ENCODE measurements at regions of chr6 and their contacts with region 1.

Region 1: DNA sequence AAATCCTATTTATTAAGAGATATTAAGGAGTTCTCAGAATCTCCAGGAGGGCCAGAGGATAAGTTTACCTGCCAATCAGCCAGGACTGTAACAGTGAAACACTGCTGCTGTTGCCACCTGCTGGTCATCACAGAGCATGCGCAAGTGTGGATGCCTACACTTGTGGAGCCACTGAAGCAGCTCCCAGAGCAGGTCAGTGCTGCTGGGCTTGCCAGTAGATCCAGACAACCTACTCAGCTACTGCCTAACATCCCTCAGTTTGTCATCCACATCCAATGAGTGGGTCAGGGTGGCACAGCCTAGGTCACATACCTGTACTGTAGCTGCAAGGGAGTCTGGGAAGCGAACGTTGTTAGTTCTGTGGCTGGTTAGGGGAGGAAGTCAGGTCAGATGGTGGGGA is 18.3 kb upstream of the NHSL1 start:
- DNase-seq: peak; percentile 68
- ATAC-seq: peak; percentile 97
- H3K4me3 ChIP-seq: no peak overlapping the region
- H3K27ac ChIP-seq: no peak overlapping the region
- H3K4me1 ChIP-seq: no peaks in the 10 kb centered on the region
- H3K27me3 ChIP-seq: no peaks in the 10 kb centered on the region
- CTCF ChIP-seq: peak; percentile 75

Region 2: DNA sequence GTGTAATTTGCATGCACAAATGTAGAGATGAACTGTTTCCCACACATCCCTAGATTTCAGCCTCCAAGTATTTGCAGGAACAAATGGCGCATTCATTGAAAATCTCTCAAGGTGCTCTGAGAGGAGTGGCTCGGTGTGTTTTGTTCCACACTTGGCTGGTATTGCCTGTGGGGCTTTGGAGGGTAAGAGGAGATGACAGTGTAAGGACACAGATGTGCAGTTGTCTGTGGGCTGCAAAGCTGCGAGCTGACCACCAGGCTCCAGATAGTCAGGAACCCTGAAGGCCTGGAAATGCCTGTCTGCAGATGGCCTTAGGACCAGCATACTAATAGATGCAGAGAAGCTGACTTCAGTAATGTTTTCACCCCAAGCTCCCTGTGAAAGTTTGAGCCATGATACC is 241.7 kb before region 1 on chr6:
- CTCF ChIA-PET with region 1: no interaction called
- POLR2A ChIA-PET with region 1: interaction called, 22 read pairs
- intact Hi-C with region 1: no loop called
- DNase-seq: no peak
- ATAC-seq: peak; percentile 24; the same call in 1 of the 2 replicates
- H3K4me3 ChIP-seq: no peak overlapping the region
- H3K27ac ChIP-seq: no peak overlapping the region
- H3K4me1 ChIP-seq: no peaks in the 10 kb centered on the region
- H3K27me3 ChIP-seq: no peaks in the 10 kb centered on the region
- CTCF ChIP-seq: no peak